ENCODE measurements at regions of chr17 and their contacts with region 1.

Region 1: DNA sequence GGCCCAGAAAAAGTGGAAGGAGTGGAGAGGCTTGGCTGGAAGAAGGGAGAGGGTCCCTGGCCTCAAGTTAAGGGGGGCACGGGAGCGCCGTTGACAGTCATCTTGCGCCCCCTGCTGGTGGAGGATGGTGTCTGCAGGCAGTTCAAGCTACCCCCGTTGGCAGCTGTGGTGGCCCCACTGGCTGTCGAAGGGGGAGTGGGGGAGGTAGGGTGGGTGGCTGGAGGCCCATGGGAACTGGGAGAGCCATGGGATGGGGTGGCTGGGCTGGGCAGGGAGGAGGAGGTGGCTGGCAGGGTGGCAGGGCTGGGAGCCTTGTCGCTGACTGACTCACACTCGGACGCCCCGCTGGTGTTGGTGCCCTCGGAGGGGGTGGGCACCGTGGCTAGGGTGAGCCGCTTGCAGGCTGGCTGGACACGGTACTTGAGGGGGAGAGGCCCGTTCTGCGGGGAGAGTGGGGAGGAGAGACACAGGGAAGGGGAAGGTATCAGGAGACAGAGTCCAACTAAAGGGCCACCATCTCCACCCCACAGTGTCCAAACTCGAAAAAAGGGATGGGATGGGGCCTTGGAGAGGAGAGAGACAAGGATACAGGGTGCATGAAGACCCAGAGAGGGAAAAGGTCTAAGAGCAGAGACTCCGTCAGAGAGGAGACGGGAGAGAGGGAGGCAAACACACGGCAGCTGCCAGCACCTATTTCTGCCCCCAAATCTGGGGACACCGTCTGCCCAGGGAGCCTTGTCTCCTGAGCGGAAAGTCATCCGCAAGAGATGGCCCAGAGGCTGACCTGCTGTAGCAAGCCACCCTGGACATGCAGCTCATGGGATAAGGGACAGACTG is 5.2 kb downstream of the CISD3 start:
- DNase-seq: no peak
- H3K4me3 ChIP-seq: no peak overlapping the region
- H3K27ac ChIP-seq: no peak overlapping the region
- H3K4me1 ChIP-seq: peaks cover 19% of the 10 kb centered on the region
- H3K27me3 ChIP-seq: no peaks in the 10 kb centered on the region
- CTCF ChIP-seq: peak; percentile 78 to 94
- POLR2A ChIP-seq: peak; percentile 11

Region 2: GRCh38 chr17:38605888-38606645 is 129.3 kb before region 1 on chr17 and contains the start of gene SRCIN1:
- CTCF ChIA-PET with region 1: no interaction called
- POLR2A ChIA-PET with region 1: no interaction called
- dilution Hi-C with region 1: no loop called
- intact Hi-C with region 1: no loop called
- DNase-seq: no peak
- H3K4me3 ChIP-seq: peak within 1 kb of the TSS in 2 of 3 experiments; percentile 41 to 58
- H3K27ac ChIP-seq: no peak within 1 kb of the TSS
- H3K4me1 ChIP-seq: no peaks in the 10 kb centered on the region
- H3K27me3 ChIP-seq: peaks cover 28 to 36% of the 10 kb centered on the region in 2 experiments
- CTCF ChIP-seq: peak; percentile 96 to 99
- POLR2A ChIP-seq: no peak
- total RNA-seq, gene SRCIN1: 0.12 and 0.35 TPM in 2 replicates

Region 3: GRCh38 chr17:38674749-38675615 is 60.4 kb before region 1 on chr17 and contains the start of gene EPOP:
- CTCF ChIA-PET with region 1: interaction called, 138 read pairs
- POLR2A ChIA-PET with region 1: interaction called, 3 read pairs
- dilution Hi-C with region 1: no loop called
- intact Hi-C with region 1: loop called (anchors 1 kb)
- DNase-seq: peak; percentile 85
- H3K4me3 ChIP-seq: peak within 1 kb of the TSS; percentile 32 to 63 (median 41)
- H3K27ac ChIP-seq: no peak within 1 kb of the TSS
- H3K4me1 ChIP-seq: peaks cover 14% of the 10 kb centered on the region
- H3K27me3 ChIP-seq: peaks cover 28 to 39% of the 10 kb centered on the region in 2 experiments
- CTCF ChIP-seq: no peak
- POLR2A ChIP-seq: no peak
- total RNA-seq, gene EPOP: 2.6 and 2.9 TPM in 2 replicates

Region 4: GRCh38 chr17:38702166-38702899 is 33.0 kb before region 1 on chr17:
- CTCF ChIA-PET with region 1: interaction called, 26 read pairs
- POLR2A ChIA-PET with region 1: interaction called, 3 read pairs
- dilution Hi-C with region 1: no loop called
- intact Hi-C with region 1: loop called (anchors 1 kb)
- DNase-seq: peak; percentile 77
- H3K4me3 ChIP-seq: peak overlapping the region; percentile 31 to 59 (median 47)
- H3K27ac ChIP-seq: peak overlapping the region; percentile 27
- H3K4me1 ChIP-seq: peaks cover 44% of the 10 kb centered on the region
- H3K27me3 ChIP-seq: peaks cover 0 to 2% of the 10 kb centered on the region in 2 experiments
- CTCF ChIP-seq: no peak
- POLR2A ChIP-seq: peak; percentile 44

Region 5: DNA sequence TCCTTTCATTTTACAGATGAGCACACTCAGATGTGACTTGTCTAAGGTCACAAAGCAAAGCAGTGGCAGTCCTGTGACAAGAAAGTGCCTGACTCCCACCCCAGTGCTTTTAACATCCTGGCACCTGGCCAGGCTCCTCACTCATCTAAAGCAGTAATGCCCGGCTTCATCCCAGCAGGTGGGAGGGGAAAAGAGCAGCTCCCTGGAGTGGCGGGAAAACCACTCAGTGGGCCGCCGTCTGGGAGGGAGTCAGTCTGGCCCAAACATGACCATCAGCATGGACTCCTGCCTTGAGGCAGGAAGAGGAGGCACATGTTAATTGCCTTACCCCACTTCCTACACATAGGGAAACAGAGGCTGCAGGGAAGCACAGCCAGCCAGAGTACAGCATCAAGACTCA is 10.2 kb after region 1 on chr17:
- CTCF ChIA-PET with region 1: interaction called, 24 read pairs
- POLR2A ChIA-PET with region 1: interaction called, 4 read pairs
- dilution Hi-C with region 1: no loop called
- intact Hi-C with region 1: no loop called
- DNase-seq: no peak
- H3K4me3 ChIP-seq: no peak overlapping the region
- H3K27ac ChIP-seq: no peak overlapping the region
- H3K4me1 ChIP-seq: peaks cover 47% of the 10 kb centered on the region
- H3K27me3 ChIP-seq: no peaks in the 10 kb centered on the region
- CTCF ChIP-seq: no peak
- POLR2A ChIP-seq: no peak

Region 6: DNA sequence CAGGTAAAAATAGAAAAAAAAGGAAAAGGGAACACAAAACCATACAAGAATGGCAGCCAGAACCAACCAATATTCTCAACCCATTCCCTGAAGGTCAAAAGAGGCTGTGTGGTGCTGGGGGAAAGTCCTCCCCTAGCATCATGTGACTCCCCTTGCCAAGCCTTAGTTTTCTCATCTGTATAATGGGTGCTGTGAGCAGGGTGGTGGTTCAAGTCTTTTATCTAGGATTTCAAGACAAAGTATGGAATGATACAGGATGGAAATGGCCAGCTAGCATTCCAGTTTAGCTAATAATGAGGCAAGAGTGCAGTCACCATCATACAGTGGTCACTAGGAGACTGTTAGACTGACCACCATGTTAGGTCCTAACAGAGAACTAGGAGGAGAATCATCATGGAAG is 37.9 kb after region 1 on chr17:
- CTCF ChIA-PET with region 1: no interaction called
- POLR2A ChIA-PET with region 1: no interaction called
- dilution Hi-C with region 1: no loop called
- intact Hi-C with region 1: no loop called
- DNase-seq: no peak
- H3K4me3 ChIP-seq: no peak overlapping the region
- H3K27ac ChIP-seq: no peak overlapping the region
- H3K4me1 ChIP-seq: no peaks in the 10 kb centered on the region
- H3K27me3 ChIP-seq: no peaks in the 10 kb centered on the region
- CTCF ChIP-seq: no peak
- POLR2A ChIP-seq: no peak

Region 7: DNA sequence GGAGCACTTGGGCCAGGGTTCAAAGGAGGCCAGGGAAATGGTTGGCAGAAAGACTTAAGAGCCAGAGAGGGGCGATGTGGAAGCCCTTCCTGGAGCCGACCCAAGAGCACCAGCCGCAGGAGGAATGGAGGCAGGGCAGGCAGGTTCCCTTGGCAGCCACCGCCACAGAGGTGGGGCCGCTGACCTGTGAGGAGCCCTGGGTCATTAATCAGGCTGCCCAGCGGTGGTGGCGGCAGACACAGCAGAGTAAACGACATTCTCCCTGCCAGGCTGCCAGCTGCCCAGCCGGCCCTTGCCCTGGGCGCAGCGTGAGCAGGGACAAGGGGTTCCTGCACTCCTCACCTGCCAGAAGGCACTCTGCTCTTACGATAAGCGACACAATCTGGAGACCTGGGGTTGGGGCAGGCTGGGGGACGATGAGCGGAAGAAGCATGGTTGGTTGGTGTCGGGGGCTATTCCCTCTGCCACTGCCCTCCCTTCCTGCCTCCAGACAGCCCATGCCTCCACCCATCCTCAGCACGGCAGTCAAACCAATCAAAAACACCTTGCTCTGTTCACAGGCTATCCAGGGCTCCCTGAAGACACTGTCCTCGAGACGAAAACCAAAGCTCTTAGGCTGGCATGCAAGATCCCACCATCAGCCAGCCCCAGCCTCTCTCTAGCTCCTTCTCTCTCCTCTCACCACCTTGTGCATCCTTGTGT is 375.2 kb after region 1 on chr17:
- CTCF ChIA-PET with region 1: no interaction called
- POLR2A ChIA-PET with region 1: no interaction called
- dilution Hi-C with region 1: no loop called
- intact Hi-C with region 1: no loop called
- DNase-seq: no peak
- H3K4me3 ChIP-seq: no peak overlapping the region
- H3K27ac ChIP-seq: no peak overlapping the region
- H3K4me1 ChIP-seq: no peaks in the 10 kb centered on the region
- H3K27me3 ChIP-seq: peaks cover 4 to 15% of the 10 kb centered on the region in 2 experiments
- CTCF ChIP-seq: no peak
- POLR2A ChIP-seq: no peak